Posterior vena cava (tissue), 2 donors: ENCODE measurements at regions of chr1 and their contacts with region 1.

Region 1: GRCh38 chr1:202462342-202463076 is 114.0 kb downstream of the PPP1R12B start:
- DNase-seq: no peak

Region 2: DNA sequence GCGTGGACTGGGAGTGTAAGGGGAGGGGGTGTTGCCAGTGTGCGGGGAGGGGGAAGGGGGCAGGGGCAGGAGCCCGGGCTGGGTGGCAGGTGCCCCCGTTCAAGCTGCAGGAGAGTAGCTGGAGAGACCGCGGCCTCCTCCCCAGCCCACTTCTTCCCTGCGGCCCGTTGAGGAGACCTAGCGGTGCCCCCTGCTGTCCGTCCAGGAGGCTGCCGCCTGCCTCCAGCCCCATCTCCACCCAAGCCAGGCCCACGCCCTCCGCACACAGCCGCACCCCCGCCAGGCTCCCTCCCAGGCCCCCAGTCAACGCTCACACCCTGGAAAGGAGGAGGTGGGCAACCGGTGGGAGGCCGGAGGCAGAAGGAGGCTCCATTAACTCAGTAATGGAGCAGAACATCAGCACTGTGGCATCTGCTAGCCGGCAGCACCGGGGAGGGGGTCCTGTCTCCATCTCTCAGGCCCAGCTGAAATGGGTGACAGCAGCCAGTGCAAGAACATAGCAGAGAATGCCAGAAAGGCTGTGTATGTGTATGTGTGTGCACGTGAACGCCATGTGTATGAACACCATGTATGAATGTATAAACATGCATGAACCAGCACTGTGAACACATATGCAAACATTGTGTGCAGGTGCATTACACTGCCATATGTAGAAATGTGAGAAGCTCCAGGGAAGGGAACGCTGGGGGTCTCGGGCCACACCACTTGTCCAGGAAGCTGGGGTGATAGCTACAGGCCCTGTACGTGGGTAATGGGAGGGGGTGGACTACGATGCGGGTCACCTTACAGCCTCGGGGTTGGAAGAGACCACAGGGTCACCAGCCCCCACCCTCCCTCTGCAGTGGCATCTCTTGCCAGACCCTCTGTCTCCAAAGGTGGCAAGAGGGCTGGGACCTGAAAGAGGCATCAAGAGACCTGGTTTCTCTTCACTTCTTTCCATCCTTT is 163.2 kb after region 1 on chr1:
- intact Hi-C with region 1: loop called in 1 of 2 experiments (anchors 10 kb)
- DNase-seq: peak; percentile 91